ENCODE measurements at regions of chr4 and their contacts with region 1.

Region 1: GRCh38 chr4:40056716-40057585 is at the start of gene N4BP2:
- DNase-seq: peak; percentile 76
- H3K4me3 ChIP-seq: peak within 1 kb of the TSS; percentile 66 to 98 (median 85)
- H3K27ac ChIP-seq: peak within 1 kb of the TSS; percentile 80
- H3K4me1 ChIP-seq: peaks cover 13% of the 10 kb centered on the region
- H3K27me3 ChIP-seq: no peaks in the 10 kb centered on the region
- CTCF ChIP-seq: peak; percentile 28 to 74
- total RNA-seq, gene N4BP2: 5.7 to 5.8 TPM

Region 2: GRCh38 chr4:39937683-39938268 is 119.2 kb before region 1 on chr4:
- CTCF ChIA-PET with region 1: no interaction called
- dilution Hi-C with region 1: no loop called
- in situ Hi-C with region 1: no loop called
- intact Hi-C with region 1: no loop called
- DNase-seq: no peak
- H3K4me3 ChIP-seq: no peak overlapping the region
- H3K27ac ChIP-seq: no peak overlapping the region
- H3K4me1 ChIP-seq: peaks cover 22% of the 10 kb centered on the region
- H3K27me3 ChIP-seq: no peaks in the 10 kb centered on the region
- CTCF ChIP-seq: no peak

Region 3: GRCh38 chr4:40020221-40020943 is 36.6 kb before region 1 on chr4:
- CTCF ChIA-PET with region 1: interaction called, 28 read pairs
- dilution Hi-C with region 1: no loop called
- in situ Hi-C with region 1: no loop called
- intact Hi-C with region 1: no loop called
- DNase-seq: no peak
- H3K4me3 ChIP-seq: no peak overlapping the region
- H3K27ac ChIP-seq: no peak overlapping the region
- H3K4me1 ChIP-seq: no peaks in the 10 kb centered on the region
- H3K27me3 ChIP-seq: no peaks in the 10 kb centered on the region
- CTCF ChIP-seq: no peak

Region 4: DNA sequence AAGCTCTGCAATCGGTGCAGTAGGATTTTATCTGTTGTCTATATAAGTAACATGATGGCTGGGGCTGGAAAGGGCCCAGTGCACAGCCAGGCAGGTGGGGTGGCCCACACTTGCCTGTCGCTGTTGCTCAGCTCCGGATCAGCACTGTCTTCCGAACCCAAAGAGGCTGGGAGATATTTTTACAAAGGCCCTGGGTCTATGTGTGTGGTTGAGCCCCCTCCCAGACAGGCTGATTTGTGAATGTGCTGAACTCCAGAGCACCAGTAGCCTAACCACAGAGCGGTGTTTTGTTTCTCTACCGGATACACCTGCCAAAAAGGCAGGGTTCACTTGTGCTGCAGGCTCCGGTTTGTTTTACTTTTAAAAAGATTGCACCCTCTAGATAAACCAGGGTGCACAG is 244.7 kb after region 1 on chr4:
- CTCF ChIA-PET with region 1: no interaction called
- dilution Hi-C with region 1: no loop called
- in situ Hi-C with region 1: no loop called
- intact Hi-C with region 1: loop called (anchors 2 kb)
- DNase-seq: no peak
- H3K4me3 ChIP-seq: no peak overlapping the region
- H3K27ac ChIP-seq: no peak overlapping the region
- H3K4me1 ChIP-seq: peaks cover 8% of the 10 kb centered on the region
- H3K27me3 ChIP-seq: no peaks in the 10 kb centered on the region
- CTCF ChIP-seq: no peak

Region 5: GRCh38 chr4:40316782-40317635 is 260.1 kb after region 1 on chr4:
- CTCF ChIA-PET with region 1: interaction called, 6 read pairs
- dilution Hi-C with region 1: no loop called
- in situ Hi-C with region 1: loop called in 1 of 2 experiments (anchors 10 kb)
- intact Hi-C with region 1: no loop called
- DNase-seq: peak; percentile 88
- H3K4me3 ChIP-seq: peak overlapping the region; percentile 22 to 40 (median 26)
- H3K27ac ChIP-seq: peak overlapping the region; percentile 99
- H3K4me1 ChIP-seq: peaks cover 39% of the 10 kb centered on the region
- H3K27me3 ChIP-seq: no peaks in the 10 kb centered on the region
- CTCF ChIP-seq: peak; percentile 74 to 79

Region 6: DNA sequence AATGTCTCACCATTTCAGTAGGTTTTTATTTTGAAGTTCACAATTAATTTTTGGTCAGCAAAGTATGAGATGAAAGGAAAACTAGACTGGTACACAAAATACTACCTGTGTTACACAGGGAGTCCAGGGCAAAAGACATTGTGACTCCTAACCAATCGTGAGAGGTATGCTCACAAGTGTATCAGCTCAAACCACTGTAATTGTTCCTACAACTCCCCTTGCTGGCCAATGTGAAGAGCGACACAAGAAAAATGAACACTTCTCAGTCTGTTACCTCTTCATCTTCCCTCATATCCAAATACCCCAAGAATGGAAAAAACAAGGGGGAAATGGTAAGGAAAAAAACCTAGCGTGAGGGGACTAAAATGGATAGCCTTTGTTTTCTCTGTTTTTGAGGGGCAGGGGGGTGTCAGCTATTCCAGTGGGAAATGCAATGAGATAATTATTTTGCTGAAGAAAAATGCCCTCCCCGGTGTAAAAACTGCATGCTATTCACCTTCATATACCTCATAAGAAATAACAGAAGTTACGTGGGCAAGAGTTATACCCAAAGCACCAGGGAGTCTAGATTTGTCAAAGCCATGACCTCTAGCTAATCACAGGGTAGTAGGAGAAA is 662.2 kb after region 1 on chr4:
- CTCF ChIA-PET with region 1: no interaction called
- dilution Hi-C with region 1: no loop called
- in situ Hi-C with region 1: no loop called
- intact Hi-C with region 1: loop called (anchors 2 kb)
- DNase-seq: peak; percentile 34
- H3K4me3 ChIP-seq: no peak overlapping the region
- H3K27ac ChIP-seq: no peak overlapping the region
- H3K4me1 ChIP-seq: no peaks in the 10 kb centered on the region
- H3K27me3 ChIP-seq: no peaks in the 10 kb centered on the region
- CTCF ChIP-seq: peak; percentile 39 to 67

Measured in mammary epithelial cell (primary cell).